Caco-2 (cell line): ENCODE measurements at regions of chr1 and their contacts with region 1.

Region 1: GRCh38 chr1:11037740-11038182 is 9.3 kb downstream of the MASP2 start:
- DNase-seq: peak; percentile 73 to 84
- H3K4me3 ChIP-seq: no peak overlapping the region
- H3K4me3 Mint-ChIP-seq: no peak overlapping the region
- H3K27ac Mint-ChIP-seq: no peak overlapping the region
- H3K4me1 ChIP-seq: no peaks in the 10 kb centered on the region
- H3K4me1 Mint-ChIP-seq: no peaks in the 10 kb centered on the region
- H3K27me3 ChIP-seq: no peaks in the 10 kb centered on the region
- H3K27me3 Mint-ChIP-seq: no peaks in the 10 kb centered on the region
- CTCF ChIP-seq: peak; percentile 89 to 92

Region 2: DNA sequence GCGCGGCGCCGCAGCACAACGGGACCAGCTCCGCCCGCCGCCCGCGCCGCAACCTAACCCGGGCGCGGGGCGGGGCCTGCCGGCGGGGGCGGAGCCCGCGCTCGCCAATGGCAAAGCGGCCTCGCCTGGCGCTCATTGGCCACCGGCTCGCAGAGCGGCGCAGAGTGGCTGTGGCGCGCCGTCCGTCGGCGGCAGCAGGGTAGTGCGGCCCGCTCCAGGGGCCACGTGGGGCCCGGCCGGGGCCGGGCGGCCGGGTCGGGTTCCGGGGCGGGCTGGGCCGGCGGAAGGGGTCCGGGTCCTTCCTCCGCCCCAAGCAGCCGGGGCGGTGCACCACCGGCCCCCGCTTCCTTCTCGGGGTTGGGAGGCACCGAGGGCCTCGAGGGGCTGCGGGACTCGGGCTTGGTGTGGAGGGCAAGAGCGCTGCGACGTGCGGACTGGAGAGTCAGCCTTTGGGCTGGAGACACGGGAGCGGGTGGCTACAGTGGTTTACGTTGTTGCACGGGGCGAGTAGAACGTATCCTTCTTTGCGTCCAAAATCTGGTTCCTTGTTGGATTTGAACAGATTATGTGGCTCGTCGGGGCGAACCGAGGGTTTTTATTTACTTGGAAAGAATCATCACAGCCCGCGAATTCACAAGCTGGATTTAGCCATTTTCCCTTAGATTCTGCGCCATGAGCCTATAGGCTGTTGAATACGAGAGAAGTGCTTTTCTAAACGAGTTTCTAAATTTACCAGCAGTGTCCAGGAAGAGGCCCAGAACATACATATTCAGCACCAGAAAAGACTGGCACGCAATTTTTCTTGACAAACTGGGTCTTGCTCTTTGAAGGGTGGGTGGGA is 22.4 kb after region 1 on chr1 and contains the start of gene SRM:
- CTCF ChIA-PET with region 1: interaction called, 15 read pairs
- POLR2A ChIA-PET with region 1: interaction called, 6 read pairs
- intact Hi-C with region 1: loop called (anchors 2 kb)
- DNase-seq: peak; percentile 83 to 95
- H3K4me3 ChIP-seq: peak within 1 kb of the TSS; percentile 87
- H3K4me3 Mint-ChIP-seq: peak within 1 kb of the TSS; percentile 95
- H3K27ac Mint-ChIP-seq: peak within 1 kb of the TSS; percentile 90
- H3K4me1 ChIP-seq: 0 out of 2 replicates have a peak, but pooled peaks cover 6% of the 10 kb centered on the region
- H3K4me1 Mint-ChIP-seq: no peaks in the 10 kb centered on the region
- H3K27me3 ChIP-seq: no peaks in the 10 kb centered on the region
- H3K27me3 Mint-ChIP-seq: no peaks in the 10 kb centered on the region
- CTCF ChIP-seq: peak in 1 of 2 experiments; percentile 25
- total RNA-seq, gene SRM: 125 and 133 TPM in 2 replicates

Region 3: DNA sequence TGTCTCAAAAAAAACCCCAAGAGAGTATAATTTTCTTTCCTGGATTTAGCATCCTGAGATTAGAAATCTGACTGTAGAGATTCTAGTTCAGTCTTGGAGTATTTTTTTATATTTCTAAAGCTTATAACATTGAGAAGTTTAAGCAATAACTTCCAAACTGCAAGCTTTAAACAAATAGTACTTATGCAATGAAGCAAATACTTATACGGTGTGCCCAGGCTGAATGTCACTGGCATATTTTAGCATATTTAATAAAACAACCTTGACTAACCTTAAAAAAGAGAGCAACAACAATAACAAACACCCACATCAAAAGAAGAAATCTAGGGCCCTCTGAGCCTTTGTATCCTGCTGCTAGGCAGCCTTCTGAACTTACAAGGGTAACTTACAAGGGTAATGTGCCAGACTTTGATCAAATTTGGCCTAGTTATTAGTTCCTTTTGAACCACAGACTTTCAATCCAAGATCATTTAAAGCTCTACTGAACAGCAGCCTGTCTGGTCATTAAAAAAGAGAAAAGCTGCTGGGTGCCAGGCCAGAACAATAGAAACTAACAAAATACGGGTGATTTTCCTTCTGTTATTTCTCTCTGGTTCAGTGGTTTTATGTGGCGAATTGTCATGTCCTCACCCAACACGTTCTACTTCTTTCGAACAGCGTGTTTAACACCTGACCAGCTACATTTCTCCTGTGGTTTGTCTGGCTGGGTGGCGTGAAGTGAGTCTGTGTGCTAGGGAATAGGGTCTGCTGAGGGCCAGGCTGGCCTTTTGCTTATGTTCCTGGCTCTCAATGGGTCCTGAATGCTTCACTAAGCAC is 208.4 kb after region 1 on chr1:
- CTCF ChIA-PET with region 1: interaction called, 4 read pairs
- POLR2A ChIA-PET with region 1: no interaction called
- intact Hi-C with region 1: loop called (anchors 1 kb)
- DNase-seq: no peak
- H3K4me3 ChIP-seq: no peak overlapping the region
- H3K4me3 Mint-ChIP-seq: no peak overlapping the region
- H3K27ac Mint-ChIP-seq: no peak overlapping the region
- H3K4me1 ChIP-seq: no peaks in the 10 kb centered on the region
- H3K4me1 Mint-ChIP-seq: no peaks in the 10 kb centered on the region
- H3K27me3 ChIP-seq: no peaks in the 10 kb centered on the region
- H3K27me3 Mint-ChIP-seq: no peaks in the 10 kb centered on the region
- CTCF ChIP-seq: no peak

Region 4: DNA sequence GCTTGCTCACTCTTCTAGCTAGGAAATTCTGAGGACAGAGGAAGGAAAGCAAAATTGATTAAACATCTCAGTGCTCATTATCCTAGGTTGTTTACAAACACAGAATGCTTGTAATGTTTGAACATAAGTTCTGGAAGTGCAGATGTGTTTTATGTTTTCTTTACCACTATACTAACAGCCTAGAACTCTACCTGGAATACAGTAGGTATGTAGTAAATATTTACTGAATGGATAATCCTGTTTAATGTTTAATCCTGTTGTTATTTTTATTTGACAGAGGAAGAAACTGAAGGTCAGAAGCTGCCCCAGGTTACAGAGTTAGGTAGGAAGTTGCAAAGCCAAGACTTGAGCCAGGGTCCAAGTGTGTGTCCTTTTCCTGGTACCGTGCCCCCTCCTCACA is 218.5 kb after region 1 on chr1:
- CTCF ChIA-PET with region 1: no interaction called
- POLR2A ChIA-PET with region 1: no interaction called
- intact Hi-C with region 1: no loop called
- DNase-seq: no peak
- H3K4me3 ChIP-seq: no peak overlapping the region
- H3K4me3 Mint-ChIP-seq: no peak overlapping the region
- H3K27ac Mint-ChIP-seq: no peak overlapping the region
- H3K4me1 ChIP-seq: no peaks in the 10 kb centered on the region
- H3K4me1 Mint-ChIP-seq: no peaks in the 10 kb centered on the region
- H3K27me3 ChIP-seq: no peaks in the 10 kb centered on the region
- H3K27me3 Mint-ChIP-seq: no peaks in the 10 kb centered on the region
- CTCF ChIP-seq: no peak